Activated CD4-positive, alpha-beta memory T cell treated with anti-CD3 and anti-CD28 coated beads, Interleukin-2, amount 10 ng/mL, durations not matched to agents 7 days and 5 days (primary cell): ENCODE measurements at regions of chr17 and their contacts with region 1.

Region 1: GRCh38 chr17:57243171-57243948 is 13.0 kb upstream of the MSI2 start:
- DNase-seq: peak; percentile 80
- H3K4me3 Mint-ChIP-seq: no peak overlapping the region
- H3K27ac Mint-ChIP-seq: no peak overlapping the region
- H3K4me1 Mint-ChIP-seq: peaks cover 5% of the 10 kb centered on the region
- H3K27me3 Mint-ChIP-seq: peaks cover 18% of the 10 kb centered on the region

Region 2: DNA sequence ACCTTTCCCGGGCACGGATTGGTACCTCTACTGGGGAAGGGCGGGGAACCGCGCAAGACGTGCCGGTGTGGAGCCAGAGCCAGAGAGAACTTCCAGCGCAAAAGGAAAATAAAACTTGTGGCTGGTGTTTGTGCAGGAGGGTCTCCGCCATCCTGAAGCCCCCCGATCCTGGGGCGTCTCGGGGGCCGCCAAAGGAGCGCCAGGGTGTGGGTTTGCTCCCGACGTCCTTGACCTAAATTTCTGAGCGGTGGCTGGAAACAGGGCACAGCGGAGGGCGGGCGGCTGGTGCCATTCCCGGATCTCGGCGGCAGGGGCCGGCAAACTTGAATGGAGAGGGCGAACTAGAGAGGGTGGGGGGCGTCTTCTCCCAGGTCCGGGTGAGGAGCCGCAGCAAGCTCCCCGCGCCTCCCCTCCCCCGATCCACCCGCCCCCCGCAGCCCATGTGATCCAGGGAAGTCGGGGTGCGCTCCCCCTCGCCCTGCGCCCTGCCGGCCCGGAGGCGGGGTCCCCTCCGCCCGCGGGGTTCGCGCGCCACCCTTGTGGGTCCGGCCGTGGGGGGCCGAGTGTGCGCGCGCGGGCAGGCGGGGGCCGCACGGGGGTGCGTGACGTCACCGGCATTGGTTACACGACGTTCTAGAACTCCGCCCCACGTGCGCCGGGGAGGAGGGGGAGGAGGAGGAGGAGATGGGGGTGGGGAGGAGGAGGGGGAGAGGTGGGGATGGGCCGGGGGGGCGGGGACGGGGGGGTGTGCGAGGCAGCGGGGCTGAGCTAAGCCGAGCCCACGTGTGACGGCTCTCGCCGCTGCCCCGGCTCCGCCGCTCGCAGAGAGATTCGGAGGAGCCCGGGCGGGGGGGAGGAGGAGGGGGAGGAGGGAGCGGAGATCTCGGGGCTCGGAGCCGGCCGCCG is 12.7 kb after region 1 on chr17 and contains the start of gene MSI2:
- CTCF ChIA-PET with region 1: interaction called, 21 read pairs
- POLR2A ChIA-PET with region 1: interaction called, 6 read pairs
- DNase-seq: peak; percentile 91
- H3K4me3 Mint-ChIP-seq: peak within 1 kb of the TSS; percentile 86
- H3K27ac Mint-ChIP-seq: peak within 1 kb of the TSS; percentile 87
- H3K4me1 Mint-ChIP-seq: peaks cover 49% of the 10 kb centered on the region
- H3K27me3 Mint-ChIP-seq: peaks cover 6% of the 10 kb centered on the region
- total RNA-seq, gene MSI2: 107 to 111 TPM

Region 3: DNA sequence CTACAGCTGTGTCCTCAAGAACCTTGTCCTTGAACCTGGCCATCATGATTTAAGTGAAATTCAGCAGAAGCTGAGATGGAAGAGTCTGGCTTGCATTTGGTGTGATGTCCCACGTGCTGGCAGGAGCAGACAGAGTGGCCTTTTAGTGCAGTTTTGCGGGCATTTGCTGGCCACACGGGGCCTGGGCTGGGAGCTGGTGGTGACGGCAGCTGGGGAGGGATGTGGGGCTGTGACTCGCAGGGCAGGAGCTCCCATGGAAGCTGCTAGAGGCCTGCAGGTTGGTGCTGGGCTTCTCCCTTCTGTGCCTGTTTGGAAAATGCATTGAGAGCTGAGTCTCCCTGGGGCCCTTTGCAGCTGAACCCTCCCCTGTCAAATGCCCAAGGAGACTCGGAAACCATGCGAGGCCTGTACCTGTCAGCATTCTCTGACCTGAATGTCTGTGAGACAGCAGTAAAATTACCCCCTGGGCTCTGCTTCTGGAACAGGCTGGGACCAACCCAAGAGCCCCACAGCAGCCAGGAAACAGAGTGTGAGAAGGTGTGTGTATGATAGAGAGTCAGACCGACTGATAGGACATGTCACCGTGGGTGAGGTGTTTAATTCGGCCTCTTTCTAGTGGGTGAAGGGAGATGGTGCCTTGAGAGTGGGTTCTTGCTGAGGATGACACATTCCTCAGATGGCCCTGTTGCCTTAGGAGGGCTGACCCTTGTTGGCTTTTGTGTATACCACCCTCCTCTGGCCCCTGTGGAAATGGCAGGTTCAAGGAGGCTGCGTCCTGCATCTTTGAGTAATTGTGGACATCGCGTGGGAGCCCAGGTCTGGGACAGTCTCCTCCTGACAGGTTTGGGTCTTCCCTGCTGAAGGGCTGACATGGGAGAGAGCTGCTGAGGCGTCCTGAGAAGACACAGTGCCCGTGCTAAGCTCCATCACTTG is 158.5 kb after region 1 on chr17:
- CTCF ChIA-PET with region 1: interaction called, 14 read pairs
- POLR2A ChIA-PET with region 1: no interaction called
- DNase-seq: no peak
- H3K4me3 Mint-ChIP-seq: no peak overlapping the region
- H3K27ac Mint-ChIP-seq: no peak overlapping the region
- H3K4me1 Mint-ChIP-seq: peaks cover 6% of the 10 kb centered on the region
- H3K27me3 Mint-ChIP-seq: no peaks in the 10 kb centered on the region

Region 4: GRCh38 chr17:57597531-57598453 is 354.4 kb after region 1 on chr17:
- CTCF ChIA-PET with region 1: interaction called, 10 read pairs
- POLR2A ChIA-PET with region 1: no interaction called
- DNase-seq: peak; percentile 47
- H3K4me3 Mint-ChIP-seq: no peak overlapping the region
- H3K27ac Mint-ChIP-seq: peak overlapping the region; percentile 96
- H3K4me1 Mint-ChIP-seq: peaks cover 55% of the 10 kb centered on the region
- H3K27me3 Mint-ChIP-seq: no peaks in the 10 kb centered on the region

Region 5: DNA sequence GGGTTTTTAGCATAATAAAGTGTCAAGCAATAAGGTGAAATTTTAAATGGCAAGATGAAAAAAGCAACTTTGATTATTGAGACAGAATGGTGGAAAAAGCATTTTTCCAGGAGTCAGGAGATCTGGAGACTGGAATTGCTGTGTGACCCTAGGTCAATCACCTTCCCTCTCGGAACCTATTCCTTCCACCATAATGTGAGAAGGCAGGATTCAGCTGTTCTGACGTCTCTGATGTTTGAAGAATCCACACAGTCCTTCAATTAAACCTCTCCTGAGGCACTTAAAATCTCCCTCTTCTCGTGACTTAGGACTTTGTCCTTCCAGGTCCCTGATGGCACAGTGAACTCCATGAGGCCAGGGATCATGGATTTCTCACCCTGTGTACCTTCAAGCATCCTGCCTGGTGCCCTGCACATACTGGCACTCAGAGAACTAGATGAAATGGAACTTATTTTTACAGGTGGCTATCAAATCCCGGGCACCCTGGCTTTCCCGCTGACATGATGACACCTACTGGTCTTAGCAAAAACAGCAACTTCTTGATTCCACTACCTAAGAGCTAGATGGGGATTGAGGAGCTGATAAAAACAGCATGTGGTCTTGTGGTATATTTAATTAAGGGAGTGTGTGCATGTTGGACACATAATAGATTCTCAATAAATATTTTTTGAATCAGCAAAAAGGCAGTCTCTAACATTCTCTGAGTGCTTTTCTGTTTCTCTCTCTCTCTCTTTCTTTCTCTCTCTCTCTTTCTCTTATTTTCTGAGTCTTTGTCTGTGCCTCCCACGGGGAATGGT is 504.1 kb after region 1 on chr17:
- CTCF ChIA-PET with region 1: interaction called, 48 read pairs
- POLR2A ChIA-PET with region 1: no interaction called
- DNase-seq: peak; percentile 45
- H3K4me3 Mint-ChIP-seq: no peak overlapping the region
- H3K27ac Mint-ChIP-seq: no peak overlapping the region
- H3K4me1 Mint-ChIP-seq: peaks cover 8% of the 10 kb centered on the region
- H3K27me3 Mint-ChIP-seq: peaks cover 15% of the 10 kb centered on the region